ENCODE measurements at regions of chr12 and their contacts with region 1.

Region 1: GRCh38 chr12:113208041-113208934 is 13.0 kb upstream of the TPCN1 start:
- DNase-seq: peak; percentile 99
- ATAC-seq: peak; percentile 84
- H3K4me3 ChIP-seq: peak overlapping the region; percentile 16; the same call in 1 of the 2 replicates
- H3K27ac ChIP-seq: peak overlapping the region; percentile 84
- H3K4me1 ChIP-seq: peaks cover 54% of the 10 kb centered on the region
- H3K27me3 ChIP-seq: no peaks in the 10 kb centered on the region
- CTCF ChIP-seq: no peak
- EP300 ChIP-seq: peak; percentile 94 to 95
- POLR2A ChIP-seq: peak; percentile 75
- RAD21 ChIP-seq: peak; percentile 17; the same call in 1 of the 2 replicates

Region 2: DNA sequence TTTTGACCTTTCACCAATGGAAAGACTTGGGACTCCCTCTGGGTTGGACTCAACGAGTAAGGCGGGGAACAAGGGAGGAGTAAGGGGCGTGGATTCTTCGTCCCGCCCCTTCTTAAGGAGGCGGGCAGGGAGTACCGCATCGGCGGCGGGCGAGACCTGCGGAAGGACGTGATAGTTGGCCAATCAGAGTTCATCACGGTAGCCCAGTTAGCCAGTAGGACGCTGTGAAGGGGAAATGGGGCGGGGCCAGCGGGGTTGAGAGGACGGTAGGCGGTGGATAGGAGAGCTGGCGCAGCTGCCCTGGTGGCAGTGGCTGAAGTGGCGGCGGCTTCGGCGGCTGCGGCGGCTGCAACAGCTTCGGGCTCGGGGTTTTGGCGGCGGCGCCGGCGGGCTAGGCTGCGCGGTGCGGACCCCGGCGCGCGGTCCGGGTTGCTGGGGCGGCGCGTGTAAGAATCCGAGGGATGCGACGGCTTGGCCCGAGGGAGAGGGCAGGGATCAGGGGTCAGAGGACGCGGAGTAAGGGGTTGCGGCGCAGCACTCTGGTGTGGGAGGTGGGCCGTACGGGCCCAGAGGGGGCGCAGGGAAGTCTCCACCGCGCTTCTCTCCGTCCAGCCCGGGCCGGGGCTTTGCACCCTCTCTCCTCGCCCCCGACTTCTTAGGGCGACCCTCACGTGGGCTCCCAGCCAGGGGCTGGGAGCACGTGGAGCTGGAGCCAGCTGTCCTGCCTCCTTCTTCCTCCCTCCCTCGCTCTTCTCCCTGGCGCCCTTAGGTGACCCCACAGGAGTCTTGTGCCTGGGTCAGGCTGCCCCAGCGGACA is 13.1 kb after region 1 on chr12 and contains the start of gene TPCN1:
- CTCF ChIA-PET with region 1: interaction called, 5 read pairs
- POLR2A ChIA-PET with region 1: interaction called, 108 read pairs
- RAD21 ChIA-PET with region 1: interaction called, 51 read pairs
- SMC1A ChIA-PET with region 1: interaction called, 237 read pairs
- in situ Hi-C with region 1: no loop called
- intact Hi-C with region 1: loop called (anchors 1 kb)
- DNase-seq: peak; percentile 100
- ATAC-seq: peak; percentile 89
- H3K4me3 ChIP-seq: peak within 1 kb of the TSS; percentile 89
- H3K27ac ChIP-seq: peak within 1 kb of the TSS; percentile 85
- H3K4me1 ChIP-seq: peaks cover 19% of the 10 kb centered on the region
- H3K27me3 ChIP-seq: no peaks in the 10 kb centered on the region
- CTCF ChIP-seq: no peak
- EP300 ChIP-seq: no peak
- POLR2A ChIP-seq: peak; percentile 99
- RAD21 ChIP-seq: no peak
- polyA plus RNA-seq, gene TPCN1: 0.79 to 1.0 TPM

Region 3: GRCh38 chr12:113226696-113227568 is 18.6 kb after region 1 on chr12:
- CTCF ChIA-PET with region 1: interaction called, 10 read pairs
- POLR2A ChIA-PET with region 1: interaction called, 108 read pairs
- RAD21 ChIA-PET with region 1: interaction called, 51 read pairs
- SMC1A ChIA-PET with region 1: interaction called, 237 read pairs
- in situ Hi-C with region 1: no loop called
- intact Hi-C with region 1: loop called (anchors 1 kb)
- DNase-seq: no peak
- ATAC-seq: no peak
- H3K4me3 ChIP-seq: no peak overlapping the region
- H3K27ac ChIP-seq: no peak overlapping the region
- H3K4me1 ChIP-seq: peaks cover 51% of the 10 kb centered on the region
- H3K27me3 ChIP-seq: no peaks in the 10 kb centered on the region
- CTCF ChIP-seq: no peak
- EP300 ChIP-seq: no peak
- POLR2A ChIP-seq: no peak
- RAD21 ChIP-seq: no peak

Region 4: DNA sequence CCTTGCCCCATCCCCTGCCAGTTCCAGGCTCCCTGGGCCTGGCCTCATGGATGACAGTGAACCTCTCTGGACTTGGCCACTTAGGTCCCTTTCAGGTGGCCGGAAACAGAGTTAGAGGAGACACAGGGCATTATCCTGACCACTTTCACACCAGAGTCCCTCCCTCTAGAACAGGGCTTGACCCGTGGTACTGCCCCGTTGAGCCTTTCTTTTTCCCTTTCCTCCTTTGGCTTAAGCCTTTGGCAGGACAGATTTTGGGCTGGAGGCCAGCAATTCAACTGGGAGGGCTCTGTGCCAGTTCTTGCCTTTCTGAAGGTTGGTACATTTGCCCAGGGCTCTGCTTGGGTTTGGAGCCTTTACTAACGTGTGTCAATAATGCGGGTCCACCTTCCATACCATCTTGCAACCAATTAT is 35.8 kb after region 1 on chr12:
- CTCF ChIA-PET with region 1: no interaction called
- POLR2A ChIA-PET with region 1: no interaction called
- RAD21 ChIA-PET with region 1: no interaction called
- SMC1A ChIA-PET with region 1: no interaction called
- in situ Hi-C with region 1: no loop called
- intact Hi-C with region 1: no loop called
- DNase-seq: no peak
- ATAC-seq: no peak
- H3K4me3 ChIP-seq: no peak overlapping the region
- H3K27ac ChIP-seq: no peak overlapping the region
- H3K4me1 ChIP-seq: peaks cover 3% of the 10 kb centered on the region; the same call in 1 of the 2 replicates
- H3K27me3 ChIP-seq: no peaks in the 10 kb centered on the region
- CTCF ChIP-seq: no peak
- EP300 ChIP-seq: no peak
- POLR2A ChIP-seq: no peak
- RAD21 ChIP-seq: no peak

Region 5: DNA sequence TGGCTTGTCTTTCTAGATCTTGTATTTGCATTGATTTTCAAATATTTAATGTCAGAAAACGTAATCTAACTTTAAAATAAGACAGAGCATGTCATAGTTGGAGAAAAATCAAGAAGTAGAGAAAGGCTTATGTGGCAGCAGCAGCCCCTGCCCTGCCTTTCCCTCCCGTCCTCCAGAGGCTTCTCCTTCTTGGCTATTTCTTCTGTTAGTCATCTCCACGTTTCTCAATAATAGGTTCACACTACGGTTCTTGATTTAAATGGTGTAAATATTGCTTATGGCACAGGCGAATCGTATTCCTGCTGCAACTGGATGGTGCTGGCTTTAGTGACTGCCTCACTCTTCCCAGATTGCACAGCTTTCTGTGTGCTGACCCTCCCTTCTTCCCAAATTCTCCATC is 83.8 kb after region 1 on chr12:
- CTCF ChIA-PET with region 1: no interaction called
- POLR2A ChIA-PET with region 1: no interaction called
- RAD21 ChIA-PET with region 1: no interaction called
- SMC1A ChIA-PET with region 1: no interaction called
- in situ Hi-C with region 1: no loop called
- intact Hi-C with region 1: no loop called
- DNase-seq: no peak
- ATAC-seq: no peak
- H3K4me3 ChIP-seq: no peak overlapping the region
- H3K27ac ChIP-seq: no peak overlapping the region
- H3K4me1 ChIP-seq: no peaks in the 10 kb centered on the region
- H3K27me3 ChIP-seq: no peaks in the 10 kb centered on the region
- CTCF ChIP-seq: no peak
- EP300 ChIP-seq: no peak
- POLR2A ChIP-seq: no peak
- RAD21 ChIP-seq: no peak

Measured in GM12878 (cell line).